Dorsolateral prefrontal cortex (tissue), 120 donors: ENCODE measurements at regions of chr15 and their contacts with region 1.

Region 1: DNA sequence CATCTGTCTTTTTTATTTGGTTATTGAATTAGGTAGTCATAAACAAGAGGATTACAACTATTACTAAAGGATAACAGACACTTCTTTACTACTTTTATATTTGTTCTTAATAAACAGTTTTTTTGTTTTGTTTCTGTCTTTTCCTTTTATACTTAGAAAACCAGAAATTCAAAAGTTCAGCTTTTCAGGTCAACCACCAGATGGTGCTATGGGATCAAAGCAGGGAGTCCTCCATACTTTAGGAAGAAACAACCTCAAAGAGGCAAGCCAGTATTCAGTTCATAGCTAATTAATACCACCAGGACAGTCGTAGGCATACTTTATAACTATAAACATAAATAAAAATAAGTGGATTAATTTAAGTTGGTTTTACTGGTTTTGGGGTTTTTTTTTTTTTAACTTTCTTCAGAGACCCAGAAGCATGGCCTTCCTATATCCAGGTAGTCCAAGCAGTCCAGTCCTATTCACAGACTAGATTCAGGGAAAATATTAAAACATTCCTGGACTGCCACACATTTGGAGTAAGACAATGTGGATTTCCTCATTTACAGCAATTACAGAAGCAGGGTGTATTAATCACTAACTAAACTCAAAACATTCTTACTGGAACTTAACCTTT is 16.0 kb upstream of the EID1 start:
- DNase-seq: peak in 1 of 10 donors; percentile 16
- H3K4me3 ChIP-seq: no peak overlapping the region
- H3K27ac ChIP-seq: peak overlapping the region in 6 of 59 donors; percentile 15 to 44 (median 24)
- H3K27me3 ChIP-seq: no peaks in the 10 kb centered on the region
- CTCF ChIP-seq: peak; percentile 82 to 99 (median 94)

Region 2: DNA sequence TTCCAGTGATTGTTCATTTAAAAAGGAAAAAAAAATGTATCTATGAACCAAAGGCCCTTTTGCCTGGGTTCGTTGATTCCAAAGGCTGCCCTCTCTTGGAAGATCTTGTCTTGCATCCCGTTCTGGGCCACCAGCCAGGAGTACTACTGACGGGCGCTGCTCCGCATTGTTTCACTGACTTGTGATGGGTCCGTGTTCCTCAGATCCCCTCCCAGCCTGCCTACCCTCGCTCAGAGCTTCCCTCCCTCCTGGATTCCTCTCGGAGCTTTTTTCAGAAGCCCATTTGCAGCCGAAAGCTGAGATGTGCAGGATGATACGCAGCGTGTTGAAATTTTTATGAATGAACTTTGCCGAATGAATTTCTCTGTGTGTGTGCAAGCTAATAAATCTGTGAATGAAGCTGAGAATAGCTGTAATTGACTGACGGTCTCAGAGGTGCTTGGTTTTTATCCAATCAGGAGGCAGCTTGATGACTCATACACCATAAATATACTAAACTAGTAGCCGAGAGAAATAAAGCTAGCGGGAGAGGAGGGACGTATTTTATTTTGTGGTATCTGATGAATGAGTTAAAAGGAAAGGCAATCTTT is 101.7 kb after region 1 on chr15 and contains the start of gene SHC4:
- intact Hi-C with region 1: loop called in 1 of 2 experiments (anchors 5 kb)
- DNase-seq: peak; percentile 60 to 84 (median 80)
- H3K4me3 ChIP-seq: peak within 1 kb of the TSS; percentile 30 to 90 (median 69)
- H3K27ac ChIP-seq: peak within 1 kb of the TSS in 26 of 59 donors; percentile 7 to 75 (median 36)
- H3K27me3 ChIP-seq: no peaks in the 10 kb centered on the region
- CTCF ChIP-seq: peak in 51 of 56 donors; percentile 10 to 68 (median 43)
- total RNA-seq, gene SHC4: 4.1 to 69.2 (median 16.4) TPM

Region 3: GRCh38 chr15:49145651-49146609 is 284.0 kb after region 1 on chr15:
- intact Hi-C with region 1: loop called (anchors 5 kb)
- DNase-seq: peak in 3 of 10 donors; percentile 16 to 64 (median 18)
- H3K4me3 ChIP-seq: peak overlapping the region in 2 of 59 donors; percentile 4 to 39
- H3K27ac ChIP-seq: peak overlapping the region in 15 of 59 donors; percentile 3 to 66 (median 21)
- H3K27me3 ChIP-seq: no peaks in the 10 kb centered on the region
- CTCF ChIP-seq: peak; percentile 52 to 92 (median 76)

Region 4: GRCh38 chr15:49421991-49422390 is 560.1 kb after region 1 on chr15:
- intact Hi-C with region 1: loop called (anchors 10 kb)
- DNase-seq: peak in 2 of 10 donors; percentile 27 to 29
- H3K4me3 ChIP-seq: peak overlapping the region in 39 of 59 donors; percentile 1 to 59 (median 29)
- H3K27ac ChIP-seq: peak overlapping the region in 1 of 59 donors; percentile 24
- H3K27me3 ChIP-seq: peaks cover 0 to 4% (median 0%) of the 10 kb centered on the region in 45 donors
- CTCF ChIP-seq: peak; percentile 35 to 93 (median 74)

Region 5: DNA sequence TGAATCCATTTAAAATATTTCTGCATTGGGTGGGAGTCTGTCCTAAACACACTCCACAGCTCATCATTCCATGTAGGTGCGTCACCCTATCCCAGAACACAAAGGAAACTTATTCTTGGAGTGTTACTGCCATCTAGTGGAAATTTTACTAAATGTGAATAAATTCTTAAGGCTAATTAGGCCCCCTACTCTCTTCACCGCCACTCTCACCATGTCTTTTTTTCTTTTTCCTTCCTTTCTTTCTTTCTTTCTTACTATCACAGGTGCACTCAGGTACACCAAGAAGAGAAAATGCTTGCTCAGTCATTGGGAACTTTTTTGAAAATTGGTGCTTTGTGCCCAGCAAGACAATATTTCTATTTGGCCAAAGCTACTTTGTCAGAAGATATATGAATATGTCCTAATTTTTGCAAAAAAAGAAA is 1283.5 kb after region 1 on chr15:
- intact Hi-C with region 1: loop called (anchors 5 kb)
- DNase-seq: no peak
- H3K4me3 ChIP-seq: peak overlapping the region in 1 of 59 donors; percentile 3
- H3K27ac ChIP-seq: no peak overlapping the region
- H3K27me3 ChIP-seq: no peaks in the 10 kb centered on the region
- CTCF ChIP-seq: peak; percentile 49 to 91 (median 74)